ENCODE measurements at regions of chr5 and their contacts with region 1.

Region 1: DNA sequence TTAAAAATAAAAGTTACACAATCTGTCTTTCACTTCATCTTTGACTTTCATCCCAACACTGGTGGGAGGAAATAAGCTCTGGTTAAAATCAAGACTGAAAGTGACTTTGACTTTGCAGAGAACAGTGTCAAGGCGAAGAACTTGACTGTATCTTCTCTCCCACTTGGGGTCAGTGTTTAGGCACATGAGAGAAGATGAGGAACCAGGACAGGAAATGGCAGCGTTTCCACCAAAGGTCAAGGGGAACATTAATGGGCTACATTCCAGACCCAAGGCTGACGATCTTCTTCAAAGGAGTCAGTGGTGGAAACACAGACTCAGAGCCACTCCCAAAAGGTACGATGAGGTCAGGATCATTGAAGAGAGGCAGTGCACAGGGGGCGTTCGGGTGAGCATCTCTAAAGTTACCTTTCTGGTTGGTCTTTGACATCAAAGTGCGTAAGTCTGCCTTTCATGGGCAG is 409.6 kb downstream of the ARHGEF28 start:
- DNase-seq: no peak
- H3K4me3 ChIP-seq: peak overlapping the region in 1 of 4 donors; percentile 2
- H3K27ac ChIP-seq: no peak overlapping the region
- H3K4me1 ChIP-seq: peaks cover 2 to 19% (median 9%) of the 10 kb centered on the region in 3 donors
- H3K27me3 ChIP-seq: no peaks in the 10 kb centered on the region
- CTCF ChIP-seq: peak in 5 of 6 experiments; percentile 6 to 26 (median 10)
- POLR2A ChIP-seq: no peak

Region 2: DNA sequence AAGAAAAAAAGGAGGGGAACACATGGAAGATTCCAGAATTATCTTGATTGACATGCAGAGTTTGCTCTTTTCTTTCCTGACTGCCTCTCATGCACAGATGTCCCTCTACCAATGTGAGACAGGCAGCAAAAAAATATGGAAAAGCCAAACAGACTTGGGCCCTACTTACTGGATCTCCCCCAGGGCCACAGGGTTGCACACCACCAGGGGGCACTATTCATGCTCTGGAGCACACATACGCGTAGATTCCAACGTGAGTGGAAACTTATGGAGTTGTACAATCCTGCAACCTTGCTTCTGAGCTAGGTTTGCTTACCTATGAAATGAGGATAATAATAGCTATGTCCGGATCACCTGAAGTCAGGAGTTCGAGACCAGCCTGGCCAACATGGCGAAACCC is 90.1 kb before region 1 on chr5:
- intact Hi-C with region 1: no loop called
- DNase-seq: no peak
- H3K4me3 ChIP-seq: no peak overlapping the region
- H3K27ac ChIP-seq: no peak overlapping the region
- H3K4me1 ChIP-seq: peaks cover 0 to 4% (median 0%) of the 10 kb centered on the region in 3 donors
- H3K27me3 ChIP-seq: peaks cover 0 to 3% (median 0%) of the 10 kb centered on the region in 4 donors
- CTCF ChIP-seq: no peak
- POLR2A ChIP-seq: no peak

Region 3: DNA sequence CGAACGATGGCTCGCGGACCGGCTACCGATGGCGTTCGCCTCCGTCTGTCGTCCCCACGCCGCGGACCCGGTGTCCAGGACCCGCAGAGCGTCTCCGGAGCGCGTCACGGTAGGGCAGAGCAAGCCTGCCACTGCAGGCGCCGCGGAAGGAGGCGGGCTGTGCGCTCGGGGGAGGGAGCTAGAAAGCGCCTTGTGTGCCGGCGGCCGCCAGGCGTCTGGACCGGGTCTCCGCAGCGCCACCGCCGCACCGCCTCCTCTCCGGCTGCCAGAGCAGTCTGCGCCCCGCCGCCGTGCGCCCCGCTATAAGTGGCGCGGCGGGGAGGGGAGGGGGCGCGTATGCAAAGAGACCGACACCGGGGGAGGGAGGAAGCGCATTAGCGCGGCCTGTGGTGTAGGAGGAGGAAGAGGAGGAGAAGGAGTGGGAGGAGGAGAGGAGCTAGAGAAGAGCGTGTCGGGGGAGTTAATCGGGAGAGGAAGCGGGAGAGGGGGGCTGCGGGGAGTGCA is 605.0 kb after region 1 on chr5 and contains the start of gene ENC1:
- intact Hi-C with region 1: loop called (anchors 10 kb)
- DNase-seq: peak; percentile 39
- H3K4me3 ChIP-seq: peak within 1 kb of the TSS; percentile 54 to 82 (median 78)
- H3K27ac ChIP-seq: peak within 1 kb of the TSS; percentile 78 to 90 (median 88)
- H3K4me1 ChIP-seq: peaks cover 0 to 75% (median 17%) of the 10 kb centered on the region in 3 donors
- H3K27me3 ChIP-seq: no peaks in the 10 kb centered on the region
- CTCF ChIP-seq: peak in 5 of 6 experiments; percentile 43 to 85 (median 66)
- POLR2A ChIP-seq: peak in 2 of 4 donors; percentile 75 to 78
- total RNA-seq, gene ENC1: 3.8 to 6.4 (median 3.9) TPM